Spleen (tissue), 13 donors: ENCODE measurements at regions of chr13 and their contacts with region 1.

Region 1: GRCh38 chr13:52450012-52450792 is at the start of gene VPS36:
- DNase-seq: peak; percentile 100
- H3K4me3 ChIP-seq: peak within 1 kb of the TSS; percentile 70 to 80 (median 77)
- H3K27ac ChIP-seq: peak within 1 kb of the TSS; percentile 90 to 99 (median 98)
- H3K4me1 ChIP-seq: peaks cover 17 to 66% (median 43%) of the 10 kb centered on the region in 6 donors
- H3K27me3 ChIP-seq: no peaks in the 10 kb centered on the region
- CTCF ChIP-seq: peak; percentile 97 to 100 (median 100)
- POLR2A ChIP-seq: peak in 2 of 3 donors; percentile 54 to 55
- total RNA-seq, gene VPS36: 42.5 to 98.9 (median 64.0) TPM

Region 2: DNA sequence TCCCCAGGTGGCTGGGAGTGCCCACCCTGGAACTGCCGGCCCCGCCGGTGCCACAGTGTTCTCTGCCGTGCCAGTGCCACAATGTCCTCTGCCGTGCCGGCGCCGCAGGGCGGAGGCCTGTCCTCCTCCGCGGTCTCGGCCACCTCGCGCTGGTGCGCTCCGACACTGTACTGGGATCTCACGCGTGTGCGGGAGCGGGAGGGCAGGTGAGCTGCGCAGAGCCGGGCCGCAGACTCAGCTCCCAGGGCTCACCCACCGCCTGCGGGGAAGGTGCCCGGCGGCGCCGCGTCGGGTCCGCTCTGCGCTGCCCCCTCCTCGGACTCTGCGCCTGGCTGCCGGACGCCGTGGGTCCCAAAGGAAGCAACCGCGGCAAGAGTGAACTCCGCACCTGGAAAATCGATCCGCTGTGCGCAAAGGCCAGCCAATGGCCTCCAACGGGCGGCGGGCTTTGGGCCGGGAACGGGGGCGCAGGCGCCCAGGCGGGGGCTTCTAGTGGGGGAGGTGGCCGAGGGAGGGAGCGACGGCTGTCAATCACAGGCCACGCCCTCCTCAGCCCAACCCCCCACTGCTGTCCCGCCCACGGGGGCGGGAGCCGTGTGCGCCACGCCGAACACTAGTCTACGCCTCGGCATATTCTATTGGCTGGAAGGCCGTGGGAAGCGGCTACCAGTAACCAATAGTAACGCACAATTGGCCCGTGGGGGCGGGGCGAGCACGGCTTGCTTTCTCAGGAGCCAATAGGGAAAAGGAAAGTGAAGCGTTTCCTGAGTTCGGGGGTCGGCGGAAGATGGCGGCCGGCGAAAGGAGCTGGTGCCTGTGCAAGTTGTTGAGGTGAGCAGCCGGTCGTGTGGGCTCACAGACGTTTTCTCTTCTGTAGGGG is 438.3 kb before region 1 on chr13 and contains the start of gene ALG11:
- intact Hi-C with region 1: loop called (anchors 10 kb)
- DNase-seq: peak; percentile 98
- H3K4me3 ChIP-seq: peak within 1 kb of the TSS; percentile 82 to 100 (median 98)
- H3K27ac ChIP-seq: peak within 1 kb of the TSS; percentile 13 to 83 (median 70)
- H3K4me1 ChIP-seq: peaks cover 17 to 49% (median 34%) of the 10 kb centered on the region in 6 donors
- H3K27me3 ChIP-seq: peaks cover 0 to 33% (median 8%) of the 10 kb centered on the region in 7 donors
- CTCF ChIP-seq: peak in 3 of 11 experiments; percentile 10 to 51 (median 26)
- POLR2A ChIP-seq: peak in 1 of 3 donors; percentile 34
- total RNA-seq, gene ALG11: 23.1 to 32.2 (median 29.1) TPM

Region 3: DNA sequence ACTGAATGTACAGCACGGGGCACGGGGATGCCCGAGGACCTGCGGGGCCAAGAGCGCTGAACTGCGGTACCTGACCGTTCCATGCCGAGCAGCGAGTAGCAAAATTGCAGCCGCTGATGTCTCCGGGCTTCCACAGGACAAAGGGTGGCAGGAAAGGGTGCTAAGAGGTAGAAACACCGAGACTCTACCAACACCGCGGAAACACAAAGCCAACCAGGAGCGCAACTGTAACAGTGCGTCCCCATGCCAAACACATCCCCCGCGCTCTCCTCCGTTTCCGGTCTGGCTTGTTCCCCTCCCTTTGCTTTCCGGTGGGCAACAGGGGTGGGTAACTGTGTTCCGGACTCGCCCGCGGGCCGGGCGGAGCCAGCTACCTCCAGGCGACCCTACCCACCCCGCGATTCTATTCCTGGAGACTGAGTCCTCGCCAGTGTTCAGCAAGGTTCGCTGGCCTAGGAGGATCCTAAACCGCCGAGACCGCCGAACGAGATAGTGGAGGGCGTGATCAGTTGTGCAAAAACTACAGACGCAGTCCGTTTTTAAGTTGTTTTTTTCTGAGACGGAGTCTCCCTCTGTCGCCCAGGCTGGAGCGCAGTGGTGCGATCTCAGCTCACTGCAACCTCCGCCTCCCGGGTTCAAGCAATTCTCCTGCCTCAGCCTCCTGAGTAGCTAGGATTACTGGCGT is 255.9 kb before region 1 on chr13:
- intact Hi-C with region 1: loop called (anchors 10 kb)
- DNase-seq: peak; percentile 94
- H3K4me3 ChIP-seq: peak overlapping the region; percentile 68 to 98 (median 78)
- H3K27ac ChIP-seq: peak overlapping the region; percentile 80 to 91 (median 86)
- H3K4me1 ChIP-seq: peaks cover 14 to 49% (median 31%) of the 10 kb centered on the region in 6 donors
- H3K27me3 ChIP-seq: no peaks in the 10 kb centered on the region
- CTCF ChIP-seq: peak in 1 of 11 experiments; percentile 11
- POLR2A ChIP-seq: no peak

Region 4: GRCh38 chr13:52348983-52349780 is 101.0 kb before region 1 on chr13:
- intact Hi-C with region 1: loop called (anchors 10 kb)
- DNase-seq: no peak
- H3K4me3 ChIP-seq: no peak overlapping the region
- H3K27ac ChIP-seq: no peak overlapping the region
- H3K4me1 ChIP-seq: no peaks in the 10 kb centered on the region
- H3K27me3 ChIP-seq: peaks cover 0 to 8% (median 0%) of the 10 kb centered on the region in 7 donors
- CTCF ChIP-seq: no peak
- POLR2A ChIP-seq: no peak